Stomach (tissue), 19 donors: ENCODE measurements at regions of chr5 and their contacts with region 1.

Region 1: DNA sequence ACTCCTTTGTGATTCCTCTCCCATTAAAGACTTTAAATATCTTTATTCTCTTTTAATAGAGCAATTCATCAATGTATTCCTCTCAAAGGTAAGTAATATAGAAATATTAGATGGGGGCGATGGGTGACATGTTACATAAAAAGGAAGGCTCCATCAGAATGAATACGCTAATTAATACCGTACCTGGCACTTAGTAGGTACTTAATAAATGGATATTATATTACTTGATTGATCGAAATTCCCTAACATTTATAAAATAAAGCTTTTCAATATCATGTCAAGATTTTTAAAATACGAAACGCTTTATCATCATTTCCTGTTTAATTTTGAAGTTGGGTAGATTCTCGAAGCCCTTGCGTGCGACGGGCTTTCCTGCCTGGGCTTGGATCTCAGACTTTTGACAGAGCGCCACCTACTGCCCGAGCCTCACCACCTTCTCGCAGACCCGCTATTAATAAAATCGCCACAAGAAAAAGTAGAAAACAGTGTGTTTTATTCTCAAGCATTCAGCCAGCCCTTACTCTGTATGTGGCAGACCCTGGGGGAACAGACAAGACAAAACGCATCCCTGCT is 99.4 kb downstream of the C5orf15 start:
- DNase-seq: peak; percentile 78 to 94
- H3K4me3 ChIP-seq: no peak overlapping the region
- H3K27ac ChIP-seq: no peak overlapping the region
- H3K4me1 ChIP-seq: peaks cover 0 to 33% (median 14%) of the 10 kb centered on the region in 4 donors
- H3K27me3 ChIP-seq: peaks cover 0 to 9% (median 0%) of the 10 kb centered on the region in 3 donors
- CTCF ChIP-seq: peak in 5 of 7 experiments; percentile 65 to 83 (median 75)
- EP300 ChIP-seq: no peak
- POLR2A ChIP-seq: no peak

Region 2: DNA sequence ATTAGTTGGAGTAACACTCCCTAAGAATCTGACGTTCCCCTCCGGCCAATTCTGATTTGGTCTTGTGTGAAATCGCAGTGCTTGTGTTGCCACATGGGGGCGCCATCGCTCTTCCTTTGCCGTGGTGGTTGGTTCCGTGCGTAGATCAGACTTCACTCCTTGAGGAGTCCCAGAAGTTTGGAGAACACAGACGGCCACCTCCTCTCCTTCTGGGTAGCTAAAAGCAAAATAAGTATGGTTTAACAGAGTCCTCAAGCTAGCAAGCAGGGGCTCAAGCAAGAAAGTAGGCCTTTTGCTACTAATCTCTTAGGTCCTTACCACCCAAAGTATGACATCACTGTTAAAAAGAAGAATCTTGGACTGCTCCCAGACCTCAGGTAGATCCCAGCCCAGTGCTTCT is 757.7 kb before region 1 on chr5:
- intact Hi-C with region 1: loop called (anchors 10 kb)
- DNase-seq: peak; percentile 86 to 96
- H3K4me3 ChIP-seq: no peak overlapping the region
- H3K27ac ChIP-seq: no peak overlapping the region
- H3K4me1 ChIP-seq: peaks cover 0 to 12% (median 4%) of the 10 kb centered on the region in 4 donors
- H3K27me3 ChIP-seq: no peaks in the 10 kb centered on the region
- CTCF ChIP-seq: peak in 5 of 7 experiments; percentile 73 to 87 (median 86)
- EP300 ChIP-seq: no peak
- POLR2A ChIP-seq: no peak

Region 3: GRCh38 chr5:133754575-133755169 is 114.4 kb before region 1 on chr5:
- intact Hi-C with region 1: loop called (anchors 10 kb)
- DNase-seq: peak; percentile 40 to 62
- H3K4me3 ChIP-seq: no peak overlapping the region
- H3K27ac ChIP-seq: no peak overlapping the region
- H3K4me1 ChIP-seq: no peaks in the 10 kb centered on the region
- H3K27me3 ChIP-seq: peaks cover 0 to 30% (median 4%) of the 10 kb centered on the region in 3 donors
- CTCF ChIP-seq: peak in 4 of 7 experiments; percentile 28 to 41 (median 30)
- EP300 ChIP-seq: no peak
- POLR2A ChIP-seq: no peak

Region 4: GRCh38 chr5:133814152-133814551 is 54.9 kb before region 1 on chr5:
- intact Hi-C with region 1: no loop called
- DNase-seq: no peak
- H3K4me3 ChIP-seq: no peak overlapping the region
- H3K27ac ChIP-seq: no peak overlapping the region
- H3K4me1 ChIP-seq: peaks cover 5 to 20% (median 14%) of the 10 kb centered on the region in 4 donors
- H3K27me3 ChIP-seq: no peaks in the 10 kb centered on the region
- CTCF ChIP-seq: no peak
- EP300 ChIP-seq: no peak
- POLR2A ChIP-seq: no peak